Transverse colon (tissue), 4 donors: ENCODE measurements at regions of chr5 and their contacts with region 1.

Region 1: GRCh38 chr5:59039296-59040023 is 456.6 kb downstream of the RAB3C start:
- DNase-seq: peak; percentile 81
- H3K4me3 ChIP-seq: peak overlapping the region; percentile 53 to 82 (median 58)
- H3K27ac ChIP-seq: peak overlapping the region; percentile 73 to 86 (median 80)
- H3K4me1 ChIP-seq: peaks cover 0 to 42% (median 30%) of the 10 kb centered on the region in 4 donors
- H3K27me3 ChIP-seq: no peaks in the 10 kb centered on the region
- CTCF ChIP-seq: no peak
- EP300 ChIP-seq: no peak
- POLR2A ChIP-seq: peak; percentile 67

Region 2: DNA sequence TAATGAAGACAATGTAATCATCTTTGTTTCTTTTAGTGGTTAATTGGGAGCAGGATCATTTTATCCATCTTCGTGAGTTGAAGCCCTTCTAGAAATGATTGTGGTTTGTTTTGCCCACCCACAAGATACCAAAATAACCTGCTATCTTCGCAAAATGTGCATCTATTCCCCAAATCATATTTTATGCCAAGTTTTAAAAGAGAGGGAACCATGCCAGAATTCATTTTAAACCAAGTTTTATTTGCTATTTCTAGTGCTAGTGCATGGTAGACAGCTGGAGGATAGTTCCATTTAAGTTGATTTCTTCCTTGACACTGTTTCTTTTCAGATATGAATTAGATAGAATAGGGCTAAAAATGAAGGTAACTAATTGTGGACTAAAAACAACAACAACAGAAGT is 352.4 kb before region 1 on chr5:
- in situ Hi-C with region 1: no loop called
- intact Hi-C with region 1: no loop called
- DNase-seq: no peak
- H3K4me3 ChIP-seq: no peak overlapping the region
- H3K27ac ChIP-seq: no peak overlapping the region
- H3K4me1 ChIP-seq: no peaks in the 10 kb centered on the region
- H3K27me3 ChIP-seq: no peaks in the 10 kb centered on the region
- CTCF ChIP-seq: no peak
- EP300 ChIP-seq: no peak
- POLR2A ChIP-seq: no peak

Region 3: GRCh38 chr5:59058969-59059687 is 19.7 kb after region 1 on chr5:
- in situ Hi-C with region 1: no loop called
- intact Hi-C with region 1: no loop called
- DNase-seq: no peak
- H3K4me3 ChIP-seq: no peak overlapping the region
- H3K27ac ChIP-seq: no peak overlapping the region
- H3K4me1 ChIP-seq: no peaks in the 10 kb centered on the region
- H3K27me3 ChIP-seq: no peaks in the 10 kb centered on the region
- CTCF ChIP-seq: no peak
- EP300 ChIP-seq: no peak
- POLR2A ChIP-seq: no peak

Region 4: DNA sequence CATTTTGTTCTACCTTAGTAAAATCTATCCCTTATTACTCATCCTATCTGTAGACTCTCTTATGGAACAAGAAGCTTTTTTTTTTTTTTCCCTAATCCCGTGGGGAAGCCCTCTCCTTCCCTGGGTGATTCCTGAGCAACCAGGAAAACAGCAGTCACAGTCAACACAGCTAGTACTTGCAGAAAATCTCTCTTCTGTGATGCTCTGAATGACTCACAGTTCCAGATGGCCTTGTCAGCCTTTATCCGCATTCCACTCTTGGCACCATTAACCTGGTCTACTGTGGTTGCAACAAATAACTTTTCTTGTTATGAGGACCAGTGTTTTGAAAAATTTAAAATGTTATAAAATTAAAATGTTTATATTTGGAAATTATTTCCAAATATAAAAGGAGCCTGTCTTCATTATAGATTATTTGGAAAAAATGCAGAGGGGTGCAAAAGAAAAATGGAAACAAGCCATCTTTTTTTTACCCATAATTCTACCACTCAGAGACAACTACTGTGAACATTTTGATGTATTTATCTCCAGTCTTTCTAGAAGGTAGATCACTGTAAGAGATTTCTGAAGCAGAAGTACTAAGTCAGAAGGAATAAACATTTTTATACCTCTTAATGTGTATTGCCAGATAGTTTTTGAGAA is 30.1 kb after region 1 on chr5:
- in situ Hi-C with region 1: no loop called
- intact Hi-C with region 1: loop called (anchors 5 kb)
- DNase-seq: no peak
- H3K4me3 ChIP-seq: no peak overlapping the region
- H3K27ac ChIP-seq: peak overlapping the region; percentile 13 to 38 (median 33)
- H3K4me1 ChIP-seq: no peaks in the 10 kb centered on the region
- H3K27me3 ChIP-seq: no peaks in the 10 kb centered on the region
- CTCF ChIP-seq: no peak
- EP300 ChIP-seq: no peak
- POLR2A ChIP-seq: no peak

Region 5: DNA sequence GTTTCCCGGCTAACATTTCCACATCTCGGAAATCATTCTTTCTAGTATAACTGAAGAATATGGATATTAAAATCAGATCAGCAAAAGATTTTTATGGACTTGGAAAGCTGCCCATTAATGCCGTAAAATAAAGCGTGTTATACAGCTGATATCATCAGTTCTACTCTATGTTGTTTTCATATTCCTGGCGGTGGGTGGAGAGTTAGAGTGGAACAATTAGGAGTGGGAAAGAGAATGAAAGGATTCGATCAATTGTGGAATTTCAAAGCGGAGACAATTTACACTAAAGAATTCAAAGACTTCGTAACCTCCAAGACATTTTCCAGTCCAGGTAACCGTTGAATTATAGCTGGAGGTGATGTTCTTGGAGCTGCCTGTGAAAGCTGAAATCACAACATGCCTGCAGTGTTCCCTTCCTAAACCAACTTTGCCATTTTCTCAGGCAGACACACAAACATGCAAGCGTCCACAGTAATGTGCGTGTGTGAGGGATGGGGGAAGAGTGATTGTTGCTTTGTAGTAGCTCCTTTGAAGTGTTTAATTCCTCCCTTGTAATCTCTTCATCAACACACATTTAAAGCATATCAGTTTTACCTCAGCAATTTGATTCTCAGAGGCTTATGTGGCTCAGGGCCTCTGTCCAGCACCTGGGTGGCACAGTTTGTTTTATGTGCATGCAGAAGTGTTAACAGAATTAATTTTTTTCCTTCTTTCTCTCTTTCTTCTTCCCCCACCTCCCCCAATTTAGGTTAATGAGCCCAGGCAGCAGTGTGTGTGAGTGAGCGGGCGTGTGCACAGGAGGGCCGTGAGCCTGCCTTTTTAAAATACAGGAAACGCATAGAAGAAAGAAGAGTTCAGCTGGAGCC is 87.5 kb after region 1 on chr5:
- in situ Hi-C with region 1: no loop called
- intact Hi-C with region 1: loop called (anchors 2 kb)
- DNase-seq: no peak
- H3K4me3 ChIP-seq: peak overlapping the region in 3 of 4 donors; percentile 13 to 27 (median 14)
- H3K27ac ChIP-seq: peak overlapping the region; percentile 83 to 87 (median 87)
- H3K4me1 ChIP-seq: peaks cover 18 to 51% (median 22%) of the 10 kb centered on the region in 4 donors
- H3K27me3 ChIP-seq: no peaks in the 10 kb centered on the region
- CTCF ChIP-seq: no peak
- EP300 ChIP-seq: no peak
- POLR2A ChIP-seq: no peak

Region 6: DNA sequence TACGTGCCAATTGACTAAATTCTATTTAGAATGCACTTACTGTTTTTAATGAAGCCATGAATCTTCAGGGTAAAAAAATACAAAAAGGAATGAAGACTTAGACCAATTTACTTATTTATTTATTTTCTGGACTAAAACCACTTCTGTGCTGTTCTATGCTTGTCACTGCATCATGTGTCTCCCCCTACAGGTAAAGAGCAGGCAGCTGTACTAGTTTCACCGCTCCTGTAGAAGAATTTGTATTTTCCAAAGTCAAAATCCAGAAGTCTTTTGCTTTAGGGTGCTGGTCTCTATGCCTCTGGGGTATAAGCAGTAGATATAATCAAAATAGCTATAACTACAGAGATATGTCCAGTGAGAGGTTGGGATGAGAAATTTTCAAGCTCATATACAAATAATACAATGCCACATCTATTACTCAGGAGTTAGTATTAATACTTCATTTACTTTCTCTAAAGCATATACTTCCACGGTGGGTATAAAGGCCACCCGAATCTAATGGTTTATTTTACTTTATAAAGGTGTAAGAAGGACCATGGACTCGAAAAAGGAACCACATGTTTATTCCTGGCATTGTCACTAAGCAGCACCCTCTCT is 134.9 kb after region 1 on chr5:
- in situ Hi-C with region 1: loop called in 1 of 4 experiments (anchors 25 kb)
- intact Hi-C with region 1: loop called (anchors 10 kb)
- DNase-seq: no peak
- H3K4me3 ChIP-seq: no peak overlapping the region
- H3K27ac ChIP-seq: no peak overlapping the region
- H3K4me1 ChIP-seq: peaks cover 0 to 4% (median 0%) of the 10 kb centered on the region in 4 donors
- H3K27me3 ChIP-seq: no peaks in the 10 kb centered on the region
- CTCF ChIP-seq: peak; percentile 74 to 80 (median 78)
- EP300 ChIP-seq: no peak
- POLR2A ChIP-seq: no peak